HepG2 (cell line): ENCODE measurements at regions of chr7 and their contacts with region 1.

Region 1: GRCh38 chr7:93245525-93246432 is 13.6 kb downstream of the VPS50 start:
- DNase-seq: peak; percentile 21
- ATAC-seq: no peak
- H3K4me3 ChIP-seq: no peak overlapping the region
- H3K27ac ChIP-seq: no peak overlapping the region
- H3K4me1 ChIP-seq: no peaks in the 10 kb centered on the region
- H3K27me3 ChIP-seq: no peaks in the 10 kb centered on the region
- CTCF ChIP-seq: peak; percentile 53
- EP300 ChIP-seq: no peak
- POLR2A ChIP-seq: no peak
- RAD21 ChIP-seq: no peak

Region 2: DNA sequence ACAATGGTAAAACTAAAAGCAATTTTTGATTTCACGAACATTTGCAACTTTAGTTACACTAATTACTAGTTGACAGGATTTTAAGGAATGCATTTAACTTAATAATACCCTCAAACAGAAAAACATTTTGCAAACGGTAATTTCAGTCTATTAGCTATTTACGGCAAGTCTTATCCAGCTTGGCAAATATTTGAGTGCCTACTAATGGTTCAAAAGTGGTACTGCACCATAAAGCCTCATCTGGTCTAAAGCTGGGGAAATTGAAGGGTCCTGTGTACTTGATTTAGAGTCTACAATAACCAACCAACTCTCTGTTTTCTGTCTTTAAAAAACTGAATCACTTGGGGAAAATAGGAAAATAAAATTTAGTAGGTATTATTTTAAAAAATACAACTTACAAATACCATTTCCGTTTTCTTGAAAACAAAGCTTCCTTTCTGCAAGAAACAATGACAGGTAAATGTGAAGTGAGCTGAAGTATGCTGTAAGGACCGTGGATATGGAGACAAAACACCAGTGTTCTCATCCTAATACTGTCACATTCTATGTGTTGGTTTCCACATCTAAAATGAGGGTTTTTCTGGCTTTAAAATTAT is 128.7 kb after region 1 on chr7:
- CTCF ChIA-PET with region 1: no interaction called
- POLR2A ChIA-PET with region 1: no interaction called
- in situ Hi-C with region 1: no loop called
- intact Hi-C with region 1: loop called (anchors 1 kb)
- DNase-seq: peak; percentile 30
- ATAC-seq: peak; percentile 79
- H3K4me3 ChIP-seq: no peak overlapping the region
- H3K27ac ChIP-seq: no peak overlapping the region
- H3K4me1 ChIP-seq: no peaks in the 10 kb centered on the region
- H3K27me3 ChIP-seq: no peaks in the 10 kb centered on the region
- CTCF ChIP-seq: peak; percentile 62
- EP300 ChIP-seq: no peak
- POLR2A ChIP-seq: no peak
- RAD21 ChIP-seq: no peak

Region 3: DNA sequence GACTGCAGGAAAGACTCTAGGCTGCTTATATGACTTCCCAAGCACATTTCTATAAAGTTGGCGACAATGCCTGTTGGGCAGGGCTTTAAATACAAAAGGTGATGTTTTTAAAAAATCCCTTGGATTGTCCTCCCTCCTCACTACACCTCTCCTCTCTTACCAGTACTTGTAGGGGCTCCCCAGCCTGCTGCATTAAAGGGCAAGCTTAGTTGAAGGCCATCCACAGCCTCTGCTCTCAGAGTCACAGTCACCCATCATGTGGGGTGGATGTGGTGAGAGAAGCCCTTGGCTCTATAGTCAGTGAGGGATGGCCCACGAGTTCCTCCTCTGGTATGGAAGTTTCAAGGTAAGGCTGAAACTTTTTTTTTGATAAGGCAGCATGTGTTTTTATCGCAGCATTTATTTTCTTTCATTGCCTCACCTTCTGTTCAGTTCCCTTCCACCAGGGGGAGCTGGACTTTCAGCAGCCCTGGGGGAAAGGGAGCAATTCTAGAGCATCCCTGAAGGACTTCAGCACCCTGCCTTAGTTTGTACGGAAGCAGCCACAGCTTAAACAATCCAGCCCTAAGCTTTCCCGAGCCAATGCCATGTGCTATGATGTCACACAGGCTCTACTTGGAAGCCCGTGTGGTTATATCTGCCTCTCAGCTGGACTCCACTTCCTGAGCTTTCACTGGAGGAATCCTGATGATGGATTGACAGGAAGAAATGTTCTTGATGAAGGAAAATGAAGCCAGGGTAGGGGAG is 196.9 kb after region 1 on chr7:
- CTCF ChIA-PET with region 1: no interaction called
- POLR2A ChIA-PET with region 1: no interaction called
- in situ Hi-C with region 1: no loop called
- intact Hi-C with region 1: loop called (anchors 2 kb)
- DNase-seq: peak; percentile 26
- ATAC-seq: peak; percentile 87
- H3K4me3 ChIP-seq: no peak overlapping the region
- H3K27ac ChIP-seq: no peak overlapping the region
- H3K4me1 ChIP-seq: no peaks in the 10 kb centered on the region
- H3K27me3 ChIP-seq: no peaks in the 10 kb centered on the region
- CTCF ChIP-seq: peak; percentile 73
- EP300 ChIP-seq: no peak
- POLR2A ChIP-seq: no peak
- RAD21 ChIP-seq: no peak